Right ventricle myocardium inferior (tissue), 1 donor: ENCODE measurements at regions of chr17 and their contacts with region 1.

Region 1: DNA sequence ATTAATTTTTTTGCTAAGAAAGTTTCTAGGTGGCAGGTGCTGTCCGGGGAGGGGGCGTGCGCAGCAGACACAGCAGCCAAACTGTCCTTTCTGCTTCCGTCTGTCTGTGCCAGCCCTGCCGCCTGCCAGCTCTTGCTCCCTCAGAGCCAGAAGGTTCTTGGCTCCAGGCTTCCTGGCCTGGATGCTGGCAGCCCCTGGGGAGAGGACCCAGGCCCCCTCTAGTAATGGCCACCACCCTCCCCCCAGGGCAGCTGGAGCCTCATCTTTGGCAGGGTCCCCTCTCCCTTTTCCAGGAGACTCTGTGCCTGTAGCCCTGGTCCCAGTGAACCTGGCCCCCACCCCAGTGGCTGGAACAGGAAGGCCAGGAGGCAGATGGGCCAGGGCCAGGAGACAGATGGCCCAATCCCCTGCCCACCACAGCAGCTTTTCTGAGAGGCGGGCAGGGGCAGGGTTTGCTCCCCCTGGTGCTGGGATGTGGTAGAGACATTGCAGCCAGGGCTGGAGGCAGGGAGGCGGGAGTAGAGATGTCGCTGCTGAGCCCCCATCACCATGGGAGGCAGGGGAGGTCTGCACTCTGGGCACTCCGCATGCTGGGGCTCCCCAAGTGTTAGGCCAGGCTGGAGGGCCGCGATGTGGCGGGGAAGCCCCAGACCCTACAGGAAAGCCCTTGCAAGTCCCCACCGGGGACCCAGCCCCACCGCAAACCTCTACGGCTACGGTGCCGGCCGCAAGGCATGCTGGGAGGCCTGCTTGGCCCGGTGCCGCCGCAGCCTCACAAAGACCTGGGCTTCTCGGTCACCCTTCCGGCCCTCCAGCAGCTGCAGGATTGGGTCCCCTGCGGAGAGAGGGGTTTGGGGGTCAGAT is 16.7 kb downstream of the UNC13D start:
- DNase-seq: peak; percentile 82
- ATAC-seq: peak; percentile 74

Region 2: GRCh38 chr17:75679706-75680442 is 147.6 kb before region 1 on chr17:
- intact Hi-C with region 1: no loop called
- DNase-seq: no peak
- ATAC-seq: peak; percentile 62

Region 3: GRCh38 chr17:75720725-75721462 is 106.6 kb before region 1 on chr17 and contains the start of gene ITGB4:
- intact Hi-C with region 1: no loop called
- DNase-seq: peak; percentile 66
- ATAC-seq: peak; percentile 49
- total RNA-seq, gene ITGB4: 7.5 TPM

Region 4: DNA sequence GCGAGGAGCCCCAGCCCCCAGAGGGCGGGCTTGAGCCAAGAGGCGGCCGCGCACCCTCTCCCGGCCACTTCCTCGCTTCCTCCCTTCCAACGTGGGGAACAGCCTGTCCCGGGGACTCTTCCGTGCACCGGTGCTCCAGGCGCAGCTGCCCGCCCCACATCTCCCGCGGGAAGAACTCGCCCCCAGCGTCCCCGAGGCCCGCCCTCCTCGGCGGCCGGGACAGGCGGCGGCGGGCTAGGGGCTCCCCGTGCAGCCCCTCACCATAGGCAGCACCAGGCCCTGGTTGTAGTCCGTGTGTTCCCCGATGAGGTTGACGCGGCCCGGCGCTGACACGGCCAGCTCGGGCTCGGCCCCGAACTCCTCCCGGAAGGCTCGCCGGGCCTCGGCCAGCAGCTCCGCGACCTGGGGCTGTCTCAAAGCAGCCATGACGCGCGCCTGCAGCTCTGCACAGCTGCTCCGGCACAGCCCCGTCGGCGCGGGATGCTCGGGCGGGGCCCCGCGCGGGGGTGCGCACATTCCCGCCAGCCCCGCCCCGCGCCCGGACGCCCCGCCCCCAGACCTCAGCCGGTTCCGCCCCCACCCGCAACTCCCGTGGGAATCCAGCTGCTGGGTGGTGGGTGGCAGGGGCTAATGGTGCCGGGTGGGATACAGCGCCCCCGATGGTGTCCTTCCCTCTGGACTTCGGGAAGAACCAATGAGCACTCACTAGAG is 62.6 kb before region 1 on chr17 and contains the start of gene GALK1:
- intact Hi-C with region 1: no loop called
- DNase-seq: peak; percentile 90
- ATAC-seq: peak; percentile 89
- total RNA-seq, gene GALK1: 23.8 TPM

Region 5: GRCh38 chr17:75793460-75793859 is 34.0 kb before region 1 on chr17:
- intact Hi-C with region 1: loop called (anchors 5 kb)
- DNase-seq: no peak
- ATAC-seq: no peak

Region 6: DNA sequence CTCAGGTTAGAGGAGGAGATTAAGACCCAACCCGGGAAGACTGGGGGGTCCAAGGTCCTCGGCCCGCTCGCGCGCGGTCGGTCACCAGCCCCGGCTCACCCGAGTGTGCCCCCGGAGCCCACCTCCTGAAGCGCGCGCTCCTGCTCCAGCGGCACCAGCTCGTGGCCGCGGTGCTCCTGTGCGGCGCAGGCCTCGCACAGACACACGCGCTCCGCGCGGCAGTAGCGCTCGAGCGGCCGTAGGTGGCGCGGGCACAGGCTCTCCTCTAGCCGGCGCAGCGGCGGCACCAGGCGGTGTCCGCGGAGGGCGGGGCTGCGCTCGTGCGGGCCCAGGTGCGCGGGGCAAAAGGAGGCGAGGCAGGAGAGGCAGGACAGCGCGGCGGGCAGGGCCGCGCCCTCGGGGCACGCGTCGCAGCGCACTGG is 50.3 kb after region 1 on chr17:
- intact Hi-C with region 1: no loop called
- DNase-seq: peak; percentile 88
- ATAC-seq: peak; percentile 68